ENCODE measurements at regions of chr1 and their contacts with region 1.

Region 1: DNA sequence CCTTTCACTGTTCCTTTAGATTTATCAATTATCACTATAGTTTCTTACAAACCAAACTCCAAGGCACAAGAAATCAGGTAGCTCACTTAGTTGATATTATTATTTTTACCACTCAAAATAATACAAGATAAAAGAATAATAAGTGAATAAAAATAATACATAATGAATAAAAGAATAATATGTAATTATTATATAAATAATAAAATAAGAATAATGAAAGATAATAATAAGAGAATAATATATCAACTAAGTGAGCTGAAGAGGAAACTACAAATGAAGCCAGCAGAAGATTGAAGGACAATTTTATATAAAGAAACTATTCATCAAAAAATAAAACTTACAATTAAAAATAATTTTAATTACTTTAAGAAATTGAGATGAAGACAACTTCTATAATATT is 90.6 kb downstream of the LRRIQ3 start:
- DNase-seq: no peak
- ATAC-seq: no peak
- H3K4me3 ChIP-seq: no peak overlapping the region
- H3K27ac ChIP-seq: no peak overlapping the region
- H3K4me1 ChIP-seq: no peaks in the 10 kb centered on the region
- H3K27me3 ChIP-seq: no peaks in the 10 kb centered on the region
- CTCF ChIP-seq: no peak

Region 2: DNA sequence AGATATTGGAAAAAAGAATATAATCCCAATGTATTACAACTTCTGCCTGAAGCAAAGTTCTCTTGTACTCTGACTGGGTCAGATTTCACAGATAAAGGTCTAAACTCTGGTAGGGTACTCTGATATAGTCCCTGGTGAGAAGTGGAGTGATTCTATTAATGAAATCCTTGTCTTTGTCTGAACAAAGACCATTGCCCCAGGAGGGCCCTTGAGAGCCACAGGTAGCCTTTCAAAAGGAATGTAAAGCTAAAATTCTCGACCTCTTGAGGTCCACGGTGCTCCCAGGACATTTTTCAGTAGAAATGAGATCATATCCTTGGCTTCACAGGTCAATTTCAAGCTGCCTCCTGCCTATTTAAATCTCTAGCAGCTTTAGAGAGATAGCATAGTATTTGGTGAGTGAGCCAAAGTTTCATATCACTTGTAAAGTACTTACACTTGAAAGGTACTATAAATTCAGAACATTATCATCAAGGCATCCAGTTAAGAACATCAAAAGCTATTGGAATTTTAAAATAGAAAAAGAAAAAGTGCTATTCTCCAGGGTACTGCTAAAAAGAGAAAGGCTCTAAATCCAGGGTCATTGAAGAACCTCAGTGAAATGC is 137.9 kb after region 1 on chr1:
- CTCF ChIA-PET with region 1: no interaction called
- POLR2A ChIA-PET with region 1: no interaction called
- in situ Hi-C with region 1: no loop called
- intact Hi-C with region 1: no loop called
- DNase-seq: no peak
- ATAC-seq: no peak
- H3K4me3 ChIP-seq: no peak overlapping the region
- H3K27ac ChIP-seq: no peak overlapping the region
- H3K4me1 ChIP-seq: no peaks in the 10 kb centered on the region
- H3K27me3 ChIP-seq: no peaks in the 10 kb centered on the region
- CTCF ChIP-seq: no peak

Region 3: DNA sequence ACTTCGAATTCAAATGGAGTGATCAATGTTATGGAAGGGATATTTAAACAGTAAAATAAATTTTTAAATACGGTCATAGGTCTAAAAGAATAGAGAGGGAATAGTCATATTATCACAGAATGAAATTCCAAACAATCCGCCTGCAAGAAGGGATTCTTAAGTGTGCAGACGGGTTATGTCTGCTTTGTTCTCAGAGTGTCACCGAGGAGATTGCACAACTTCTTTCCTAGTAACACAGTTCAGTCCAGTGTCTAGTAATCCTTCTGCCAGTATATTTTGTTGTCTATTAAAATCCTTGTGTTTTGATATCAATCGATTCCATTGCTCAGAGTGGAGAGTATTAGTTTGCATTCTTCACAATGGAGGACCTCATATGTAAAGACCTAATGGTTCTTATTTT is 356.6 kb after region 1 on chr1:
- CTCF ChIA-PET with region 1: no interaction called
- POLR2A ChIA-PET with region 1: interaction called, 15 read pairs
- in situ Hi-C with region 1: no loop called
- intact Hi-C with region 1: no loop called
- DNase-seq: no peak
- ATAC-seq: no peak
- H3K4me3 ChIP-seq: no peak overlapping the region
- H3K27ac ChIP-seq: no peak overlapping the region
- H3K4me1 ChIP-seq: no peaks in the 10 kb centered on the region
- H3K27me3 ChIP-seq: no peaks in the 10 kb centered on the region
- CTCF ChIP-seq: no peak